MCF 10A (cell line): ENCODE measurements at regions of chr11 and their contacts with region 1.

Region 1: DNA sequence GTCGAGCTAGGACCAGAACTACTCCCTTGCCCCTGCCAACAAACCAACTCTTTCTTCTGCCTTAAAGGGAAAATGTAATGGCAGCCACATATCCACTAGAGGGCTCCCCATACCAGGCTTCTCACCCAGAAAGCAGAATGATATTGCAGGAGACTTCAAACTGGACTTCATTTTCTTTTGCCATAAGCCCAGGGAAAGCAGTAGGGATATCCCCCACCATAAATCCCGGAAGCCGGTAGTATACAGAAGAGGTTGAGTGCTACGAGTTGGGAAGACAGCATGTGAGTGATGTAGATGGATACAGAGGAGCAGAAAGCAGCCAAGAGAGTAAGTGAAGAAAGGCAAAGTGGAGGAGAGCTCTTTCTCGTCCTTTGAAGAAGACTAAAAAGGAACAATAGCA is 12.1 kb downstream of the PLAAT5 start:
- DNase-seq: peak; percentile 72
- H3K4me3 Mint-ChIP-seq: no peak overlapping the region
- H3K27ac Mint-ChIP-seq: no peak overlapping the region
- H3K4me1 Mint-ChIP-seq: no peaks in the 10 kb centered on the region
- H3K27me3 Mint-ChIP-seq: no peaks in the 10 kb centered on the region
- CTCF ChIP-seq: peak; percentile 92

Region 2: GRCh38 chr11:63490551-63491239 is 11.8 kb after region 1 on chr11 and contains the start of gene PLAAT5:
- CTCF ChIA-PET with region 1: interaction called, 28 read pairs
- POLR2A ChIA-PET with region 1: no interaction called
- intact Hi-C with region 1: no loop called
- DNase-seq: no peak
- H3K4me3 Mint-ChIP-seq: no peak within 1 kb of the TSS
- H3K27ac Mint-ChIP-seq: no peak within 1 kb of the TSS
- H3K4me1 Mint-ChIP-seq: no peaks in the 10 kb centered on the region
- H3K27me3 Mint-ChIP-seq: peaks cover 11% of the 10 kb centered on the region
- CTCF ChIP-seq: no peak
- total RNA-seq, gene PLAAT5: not detected in 2 replicates

Region 3: GRCh38 chr11:63567044-63567840 is 88.3 kb after region 1 on chr11:
- CTCF ChIA-PET with region 1: interaction called, 30 read pairs
- POLR2A ChIA-PET with region 1: interaction called, 4 read pairs
- intact Hi-C with region 1: no loop called
- DNase-seq: peak; percentile 82
- H3K4me3 Mint-ChIP-seq: no peak overlapping the region
- H3K27ac Mint-ChIP-seq: peak overlapping the region; percentile 98
- H3K4me1 Mint-ChIP-seq: peaks cover 45% of the 10 kb centered on the region
- H3K27me3 Mint-ChIP-seq: no peaks in the 10 kb centered on the region
- CTCF ChIP-seq: no peak

Region 4: GRCh38 chr11:63635762-63636465 is 157.0 kb after region 1 on chr11:
- CTCF ChIA-PET with region 1: interaction called, 160 read pairs
- POLR2A ChIA-PET with region 1: interaction called, 11 read pairs
- intact Hi-C with region 1: loop called (anchors 1 kb)
- DNase-seq: peak; percentile 66
- H3K4me3 Mint-ChIP-seq: no peak overlapping the region
- H3K27ac Mint-ChIP-seq: no peak overlapping the region
- H3K4me1 Mint-ChIP-seq: peaks cover 6% of the 10 kb centered on the region
- H3K27me3 Mint-ChIP-seq: no peaks in the 10 kb centered on the region
- CTCF ChIP-seq: peak; percentile 71

Region 5: DNA sequence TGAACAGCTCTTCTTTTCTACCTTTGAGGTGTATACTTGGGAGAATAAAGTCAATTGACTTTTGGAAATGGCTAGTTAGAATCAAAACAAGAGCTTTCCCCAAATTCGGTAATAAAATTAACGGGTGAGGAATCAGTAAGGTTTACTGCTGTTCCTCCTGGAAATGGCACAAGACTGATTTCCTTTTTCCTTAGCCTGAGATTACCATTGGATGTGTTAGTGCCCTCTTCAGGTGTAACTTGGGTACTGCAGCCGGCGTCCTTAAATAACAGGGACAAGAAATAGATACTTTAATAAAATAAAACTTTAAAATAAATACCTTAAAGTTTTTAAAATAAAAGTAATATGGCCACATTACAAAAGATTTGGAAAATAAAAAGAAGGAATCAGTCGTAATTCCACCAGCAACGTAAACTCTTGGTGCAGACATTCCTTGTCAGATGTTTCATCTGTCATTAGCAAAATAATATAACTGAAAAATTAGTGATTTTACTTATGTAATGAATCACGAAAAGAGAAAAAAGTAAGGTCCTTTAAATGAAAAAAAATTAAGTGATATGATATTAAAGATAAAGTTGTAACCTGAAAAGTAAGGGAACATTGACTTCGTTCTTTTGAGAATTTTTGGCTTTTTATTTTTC is 259.9 kb after region 1 on chr11:
- CTCF ChIA-PET with region 1: interaction called, 39 read pairs
- POLR2A ChIA-PET with region 1: interaction called, 4 read pairs
- intact Hi-C with region 1: loop called (anchors 1 kb)
- DNase-seq: peak; percentile 80
- H3K4me3 Mint-ChIP-seq: no peak overlapping the region
- H3K27ac Mint-ChIP-seq: no peak overlapping the region
- H3K4me1 Mint-ChIP-seq: peaks cover 5% of the 10 kb centered on the region
- H3K27me3 Mint-ChIP-seq: no peaks in the 10 kb centered on the region
- CTCF ChIP-seq: peak; percentile 84